CD4-positive, alpha-beta memory T cell (primary cell): ENCODE measurements at regions of chr11 and their contacts with region 1.

Region 1: DNA sequence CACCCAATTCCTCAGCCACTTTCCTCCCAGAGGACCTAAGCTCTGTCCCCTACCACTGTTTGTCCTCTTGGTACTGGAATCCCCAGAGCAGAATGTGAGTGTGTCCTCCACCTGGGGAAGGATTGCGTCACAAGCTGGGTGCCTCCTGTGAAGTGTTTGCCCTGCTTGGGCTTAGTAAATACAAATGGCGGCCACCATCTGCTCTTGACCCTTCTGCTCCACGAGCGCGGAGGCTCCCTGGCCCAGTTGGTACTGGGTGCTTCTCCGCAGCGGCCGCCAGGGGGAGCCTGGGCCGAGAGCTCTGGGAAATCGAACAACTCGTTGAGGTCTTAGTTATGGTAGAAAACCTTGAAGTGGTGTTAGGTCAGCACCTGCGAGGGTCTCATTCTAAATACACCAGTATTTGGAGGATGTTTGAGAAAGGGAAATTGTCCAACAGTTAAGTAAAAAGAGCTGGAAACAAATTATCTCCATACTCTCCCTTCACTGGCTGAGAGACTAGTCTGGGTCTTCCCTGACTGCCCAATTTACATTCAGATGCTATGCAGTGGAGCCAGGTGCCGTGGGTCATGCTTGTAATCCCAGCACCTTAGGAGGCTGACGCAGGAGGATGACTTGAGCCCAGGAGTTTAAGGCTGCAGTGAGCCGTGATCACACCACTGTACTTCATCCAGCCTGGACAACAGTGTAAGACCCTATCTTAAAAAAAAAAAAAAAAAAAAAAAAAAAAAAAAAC is 74.6 kb upstream of the TEAD1 start:
- DNase-seq: peak in 3 of 5 donors; percentile 0 to 23 (median 8)
- H3K4me3 ChIP-seq: no peak overlapping the region
- H3K4me3 Mint-ChIP-seq: no peak overlapping the region
- H3K27ac ChIP-seq: no peak overlapping the region
- H3K27ac Mint-ChIP-seq: no peak overlapping the region
- H3K4me1 ChIP-seq: peaks cover 19% of the 10 kb centered on the region
- H3K4me1 Mint-ChIP-seq: peaks cover 14 to 26% (median 19%) of the 10 kb centered on the region in 4 donors
- H3K27me3 ChIP-seq: no peaks in the 10 kb centered on the region
- H3K27me3 Mint-ChIP-seq: peaks cover 15 to 22% of the 10 kb centered on the region in 2 donors

Region 2: GRCh38 chr11:12587333-12587991 is 12.1 kb before region 1 on chr11:
- CTCF ChIA-PET with region 1: interaction called, 12 read pairs
- POLR2A ChIA-PET with region 1: no interaction called
- intact Hi-C with region 1: no loop called
- DNase-seq: no peak
- H3K4me3 ChIP-seq: no peak overlapping the region
- H3K4me3 Mint-ChIP-seq: no peak overlapping the region
- H3K27ac ChIP-seq: no peak overlapping the region
- H3K27ac Mint-ChIP-seq: peak overlapping the region in 1 of 7 donors; percentile 49
- H3K4me1 ChIP-seq: no peaks in the 10 kb centered on the region
- H3K4me1 Mint-ChIP-seq: peaks cover 0 to 6% (median 2%) of the 10 kb centered on the region in 4 donors
- H3K27me3 ChIP-seq: no peaks in the 10 kb centered on the region
- H3K27me3 Mint-ChIP-seq: peaks cover 3 to 11% of the 10 kb centered on the region in 2 donors

Region 3: DNA sequence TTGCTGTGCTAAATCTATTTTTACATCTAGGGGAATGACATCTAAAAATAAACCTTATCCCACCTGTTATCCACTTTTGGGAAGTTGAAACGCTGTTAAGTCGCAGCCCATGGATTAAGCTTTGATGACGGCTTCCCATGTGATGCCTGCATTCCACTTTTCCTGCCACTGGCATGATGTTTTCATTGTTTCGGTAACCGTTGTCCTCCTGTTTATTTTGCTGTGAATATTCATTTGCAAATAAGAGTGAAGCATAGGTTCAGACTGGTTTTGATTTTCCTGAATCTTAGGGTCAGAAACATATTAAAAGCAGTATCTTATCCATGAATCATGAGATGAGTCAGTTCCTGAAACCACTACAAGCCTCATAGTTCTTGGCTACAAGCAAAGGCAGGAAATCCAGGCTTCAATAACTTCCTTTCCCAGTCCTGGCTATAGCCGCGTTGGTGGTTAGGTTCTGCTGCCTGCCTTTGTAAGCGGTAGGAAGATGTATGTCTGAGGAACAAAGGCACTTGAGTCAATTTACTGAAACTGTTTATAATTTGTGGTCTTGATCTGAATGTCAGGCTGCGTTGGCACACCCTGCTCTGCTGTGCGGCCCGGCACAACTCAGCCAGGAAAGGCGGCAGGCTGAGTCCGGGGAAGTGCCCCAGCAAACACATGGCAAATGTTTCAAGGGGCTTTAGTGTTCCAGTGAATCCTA is 94.1 kb after region 1 on chr11:
- CTCF ChIA-PET with region 1: no interaction called
- POLR2A ChIA-PET with region 1: no interaction called
- intact Hi-C with region 1: no loop called
- DNase-seq: no peak
- H3K4me3 ChIP-seq: no peak overlapping the region
- H3K4me3 Mint-ChIP-seq: no peak overlapping the region
- H3K27ac ChIP-seq: no peak overlapping the region
- H3K27ac Mint-ChIP-seq: no peak overlapping the region
- H3K4me1 ChIP-seq: peaks cover 9% of the 10 kb centered on the region
- H3K4me1 Mint-ChIP-seq: peaks cover 0 to 13% (median 8%) of the 10 kb centered on the region in 4 donors
- H3K27me3 ChIP-seq: peaks cover 14% of the 10 kb centered on the region
- H3K27me3 Mint-ChIP-seq: peaks cover 34 to 64% of the 10 kb centered on the region in 2 donors